ENCODE measurements at regions of chr2 and their contacts with region 1.

Region 1: DNA sequence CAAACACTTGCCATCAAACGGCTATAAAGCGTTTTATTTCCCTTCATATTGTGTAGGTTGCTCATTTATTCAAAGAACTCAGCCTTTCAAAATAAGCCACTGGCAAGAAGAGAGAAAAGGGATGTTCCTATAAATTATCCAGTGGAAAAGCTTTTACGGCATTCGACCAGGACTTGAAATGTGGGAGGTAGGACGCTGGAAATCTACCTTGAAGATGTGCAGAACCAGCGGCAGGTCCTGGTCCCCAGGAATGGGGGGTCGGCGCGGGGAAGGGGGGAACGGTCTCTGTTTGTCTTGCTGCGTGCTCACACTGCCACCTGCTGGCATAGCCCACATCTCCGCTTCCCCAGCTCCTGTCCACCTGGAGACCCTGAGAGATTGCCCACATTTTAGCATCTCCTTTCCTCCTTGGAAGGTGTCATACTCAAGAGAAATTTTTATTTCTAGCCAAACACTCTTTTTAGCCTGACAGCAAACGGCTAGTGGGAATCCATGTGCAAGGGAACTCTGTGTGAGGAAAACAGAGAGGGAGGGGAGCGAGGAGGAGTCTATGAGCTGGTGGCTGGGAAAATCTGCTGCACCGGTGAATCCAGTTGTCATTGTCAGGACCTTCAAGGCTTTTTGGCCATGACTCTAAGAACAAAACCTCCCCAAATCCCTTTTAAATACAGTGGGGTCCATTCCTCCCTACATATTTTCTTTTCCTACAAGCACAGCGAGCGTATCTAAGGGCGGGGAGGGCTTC is 349.0 kb upstream of the PKDCC start:
- DNase-seq: peak; percentile 50
- ATAC-seq: no peak
- H3K4me3 Mint-ChIP-seq: no peak overlapping the region
- H3K27ac Mint-ChIP-seq: no peak overlapping the region
- H3K4me1 Mint-ChIP-seq: no peaks in the 10 kb centered on the region
- H3K27me3 Mint-ChIP-seq: peaks cover 5% of the 10 kb centered on the region

Region 2: DNA sequence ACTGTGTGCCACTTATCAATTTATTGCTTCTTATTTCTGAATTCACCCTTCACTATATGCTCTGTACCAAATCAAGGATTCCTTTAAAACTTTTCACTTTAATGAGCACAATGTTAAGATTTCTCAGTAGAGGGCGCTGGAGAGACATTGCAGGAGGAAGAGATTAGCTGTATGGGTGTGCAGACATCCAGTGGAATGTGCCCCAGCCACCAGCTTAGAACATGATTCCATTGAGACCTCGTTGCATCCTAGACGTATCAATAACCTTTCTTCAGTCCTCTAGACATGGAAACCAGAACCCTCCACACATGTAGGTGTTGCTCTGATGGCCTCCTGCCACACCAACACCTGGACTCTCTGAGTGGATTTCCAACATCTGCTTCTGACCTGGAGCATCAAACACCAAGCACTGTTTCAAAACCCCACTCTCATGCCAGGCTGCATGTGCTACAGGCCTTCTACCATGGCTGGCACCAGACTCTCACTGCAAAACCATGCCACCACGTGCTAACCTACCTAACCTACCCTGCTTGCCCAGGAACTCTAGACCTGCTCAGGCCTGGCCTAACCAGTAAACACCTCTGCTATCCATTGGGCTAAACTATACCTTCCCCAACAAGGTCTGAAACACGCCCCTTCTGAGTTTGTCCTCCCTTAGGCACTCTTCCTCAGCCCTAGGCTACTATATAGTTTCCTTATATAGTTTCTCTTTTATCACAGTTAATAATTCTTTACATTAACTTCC is 284.2 kb before region 1 on chr2:
- CTCF ChIA-PET with region 1: interaction called, 3 read pairs
- POLR2A ChIA-PET with region 1: no interaction called
- intact Hi-C with region 1: loop called in 1 of 2 experiments (anchors 1 kb)
- DNase-seq: peak; percentile 4
- ATAC-seq: no peak
- H3K4me3 Mint-ChIP-seq: no peak overlapping the region
- H3K27ac Mint-ChIP-seq: no peak overlapping the region
- H3K4me1 Mint-ChIP-seq: no peaks in the 10 kb centered on the region
- H3K27me3 Mint-ChIP-seq: no peaks in the 10 kb centered on the region

Region 3: GRCh38 chr2:41686156-41686555 is 12.7 kb before region 1 on chr2:
- CTCF ChIA-PET with region 1: interaction called, 10 read pairs
- POLR2A ChIA-PET with region 1: no interaction called
- intact Hi-C with region 1: no loop called
- DNase-seq: no peak
- ATAC-seq: no peak
- H3K4me3 Mint-ChIP-seq: no peak overlapping the region
- H3K27ac Mint-ChIP-seq: no peak overlapping the region
- H3K4me1 Mint-ChIP-seq: no peaks in the 10 kb centered on the region
- H3K27me3 Mint-ChIP-seq: peaks cover 11% of the 10 kb centered on the region

Measured in activated CD4-positive, alpha-beta T cell treated with anti-CD3 and anti-CD28 coated beads for 36 hours (primary cell).